ENCODE measurements at regions of chr1 and their contacts with region 1.

Region 1: DNA sequence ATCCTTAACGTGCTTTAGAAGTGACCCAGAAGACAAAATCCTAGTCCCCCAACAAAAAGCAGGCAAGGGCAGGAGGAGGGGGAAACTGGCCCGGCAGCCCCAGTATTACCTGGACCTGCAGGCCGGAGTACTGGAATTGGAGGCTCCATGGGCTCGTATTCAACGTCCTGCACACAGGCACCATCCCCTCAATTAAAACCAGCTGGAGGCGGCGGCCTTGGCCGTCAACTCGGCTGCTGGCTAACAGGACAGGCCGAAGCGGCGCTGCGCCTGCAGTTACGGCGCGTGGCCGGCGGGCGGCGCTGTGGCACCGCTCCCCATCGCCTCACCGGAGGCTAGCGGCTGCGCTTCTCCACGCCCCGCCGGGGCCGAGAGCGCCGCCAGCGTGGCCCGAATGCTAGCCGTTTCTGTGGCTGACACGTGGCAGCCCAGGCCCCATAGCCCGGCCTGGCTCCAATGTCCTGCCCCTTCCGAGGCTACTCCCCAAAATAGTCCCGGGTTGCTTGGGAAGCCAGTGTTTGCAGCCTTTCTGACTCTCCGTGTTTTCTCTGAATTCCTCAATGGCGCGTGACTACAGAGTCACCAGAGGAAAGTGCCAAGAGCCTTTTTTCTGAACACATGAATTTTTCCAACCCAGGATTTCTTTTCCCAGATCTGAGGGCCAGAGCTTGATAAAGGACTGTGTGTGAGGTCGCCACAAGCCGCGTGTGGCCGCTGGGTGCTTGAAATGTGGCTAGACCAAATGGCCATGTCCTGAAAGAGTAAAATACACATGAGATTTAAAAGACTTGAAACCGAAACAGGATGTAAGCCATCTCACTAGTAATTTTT is 82.5 kb downstream of the HHIPL2 start:
- DNase-seq: peak; percentile 93 to 97
- H3K4me3 ChIP-seq: peak overlapping the region; percentile 50 to 52
- H3K27ac ChIP-seq: peak overlapping the region; percentile 81 to 85
- H3K4me1 ChIP-seq: peaks cover 0 to 11% (median 0%) of the 10 kb centered on the region in 4 donors
- H3K27me3 ChIP-seq: no peaks in the 10 kb centered on the region
- CTCF ChIP-seq: peak; percentile 99 to 100

Region 2: GRCh38 chr1:222404710-222405109 is 60.7 kb before region 1 on chr1:
- intact Hi-C with region 1: no loop called
- DNase-seq: no peak
- H3K4me3 ChIP-seq: no peak overlapping the region
- H3K27ac ChIP-seq: no peak overlapping the region
- H3K4me1 ChIP-seq: no peaks in the 10 kb centered on the region
- H3K27me3 ChIP-seq: no peaks in the 10 kb centered on the region
- CTCF ChIP-seq: no peak

Region 3: GRCh38 chr1:222617367-222617951 is 152.0 kb after region 1 on chr1:
- intact Hi-C with region 1: loop called (anchors 5 kb)
- DNase-seq: peak; percentile 95 to 97
- H3K4me3 ChIP-seq: peak overlapping the region; percentile 98 to 100
- H3K27ac ChIP-seq: peak overlapping the region; percentile 82
- H3K4me1 ChIP-seq: peaks cover 0 to 18% (median 9%) of the 10 kb centered on the region in 4 donors
- H3K27me3 ChIP-seq: no peaks in the 10 kb centered on the region
- CTCF ChIP-seq: no peak

Region 4: GRCh38 chr1:222634180-222635013 is 169.0 kb after region 1 on chr1:
- intact Hi-C with region 1: loop called (anchors 1 kb)
- DNase-seq: peak in 1 of 2 donors; percentile 60
- H3K4me3 ChIP-seq: no peak overlapping the region
- H3K27ac ChIP-seq: peak overlapping the region; percentile 9 to 29
- H3K4me1 ChIP-seq: peaks cover 0 to 8% (median 0%) of the 10 kb centered on the region in 4 donors
- H3K27me3 ChIP-seq: no peaks in the 10 kb centered on the region
- CTCF ChIP-seq: peak; percentile 86 to 90

Region 5: DNA sequence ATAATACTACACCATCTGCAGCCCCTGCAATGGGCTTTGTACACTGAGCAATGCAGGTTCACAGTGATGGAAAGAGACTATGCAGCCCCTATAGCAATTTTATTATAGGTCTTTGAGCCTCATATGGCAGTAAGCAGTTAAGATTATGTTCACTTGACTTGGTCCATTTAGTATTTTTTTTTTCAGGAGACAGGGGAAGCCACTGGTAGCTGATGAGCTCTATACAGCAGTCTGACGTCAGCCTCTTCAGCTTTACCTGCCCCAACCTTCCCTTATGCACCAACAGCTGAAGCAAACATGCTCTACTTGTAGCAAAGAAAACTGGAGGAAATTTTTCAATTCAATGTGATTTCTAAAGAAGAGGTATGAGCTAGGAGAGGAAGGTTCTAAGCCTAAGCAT is 214.7 kb after region 1 on chr1:
- intact Hi-C with region 1: no loop called
- DNase-seq: no peak
- H3K4me3 ChIP-seq: no peak overlapping the region
- H3K27ac ChIP-seq: no peak overlapping the region
- H3K4me1 ChIP-seq: no peaks in the 10 kb centered on the region
- H3K27me3 ChIP-seq: no peaks in the 10 kb centered on the region
- CTCF ChIP-seq: no peak